GM13977 (cell line): ENCODE measurements at regions of chr13 and their contacts with region 1.

Region 1: DNA sequence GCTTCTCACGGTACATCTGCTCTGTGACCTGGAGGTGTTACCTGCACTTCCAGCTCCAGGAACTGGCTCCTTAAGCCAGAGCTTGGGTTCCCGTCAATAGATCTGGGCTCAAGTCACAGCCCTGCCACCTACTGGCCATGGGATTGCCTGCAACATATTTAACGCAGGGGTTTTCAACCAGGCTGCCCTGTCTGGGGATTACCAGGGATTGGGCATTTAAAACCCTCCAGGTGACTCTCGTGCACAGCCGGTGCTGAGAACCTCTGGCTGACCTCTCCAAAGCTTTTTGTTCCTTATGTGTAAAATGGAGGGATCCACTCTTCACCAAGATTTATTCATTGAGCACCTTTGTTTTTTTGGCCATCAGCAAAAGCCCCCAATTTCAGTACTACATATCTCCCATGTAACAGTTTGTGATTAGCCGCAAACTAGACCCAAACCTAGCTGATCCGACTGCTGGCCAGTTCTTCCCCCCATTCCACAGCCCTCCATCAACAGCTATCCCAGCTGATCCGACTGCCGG is 76.6 kb upstream of the STK24 start:
- DNase-seq: peak; percentile 84
- CTCF ChIP-seq: peak; percentile 93

Region 2: GRCh38 chr13:97855570-97856303 is 797.8 kb before region 1 on chr13:
- in situ Hi-C with region 1: loop called (anchors 25 kb)
- DNase-seq: peak; percentile 46
- CTCF ChIP-seq: peak; percentile 85

Region 3: GRCh38 chr13:98445340-98446233 is 207.9 kb before region 1 on chr13:
- in situ Hi-C with region 1: loop called (anchors 10 kb)
- DNase-seq: peak; percentile 87
- CTCF ChIP-seq: peak; percentile 99

Region 4: DNA sequence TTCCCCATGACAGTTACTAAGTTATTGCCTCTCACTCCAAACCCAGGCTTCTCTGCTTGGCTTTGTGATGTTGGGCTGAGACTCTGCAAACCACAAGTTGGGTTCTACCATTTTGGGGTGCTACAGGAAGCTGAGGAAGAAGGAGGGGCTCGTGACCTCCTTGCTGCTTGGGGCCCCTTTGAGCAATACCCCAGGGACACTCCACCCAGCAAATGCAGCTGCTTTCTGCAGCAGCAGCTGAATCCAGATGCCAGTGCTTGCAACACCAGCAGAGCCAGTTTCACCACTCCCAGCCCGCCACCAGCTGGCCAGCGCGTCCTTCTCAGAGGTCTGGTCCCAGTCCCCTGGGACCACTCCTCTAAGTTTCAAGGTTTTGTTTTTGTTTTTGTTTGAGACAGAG is 525.1 kb after region 1 on chr13:
- in situ Hi-C with region 1: no loop called
- DNase-seq: no peak
- CTCF ChIP-seq: no peak